GM13977 (cell line): ENCODE measurements at regions of chr11 and their contacts with region 1.

Region 1: GRCh38 chr11:60634126-60634525 is 65.3 kb upstream of the MS4A8 start:
- DNase-seq: peak; percentile 42
- CTCF ChIP-seq: peak; percentile 60

Region 2: GRCh38 chr11:60193687-60194433 is 440.3 kb before region 1 on chr11:
- in situ Hi-C with region 1: no loop called
- DNase-seq: peak; percentile 54
- CTCF ChIP-seq: peak; percentile 74

Region 3: DNA sequence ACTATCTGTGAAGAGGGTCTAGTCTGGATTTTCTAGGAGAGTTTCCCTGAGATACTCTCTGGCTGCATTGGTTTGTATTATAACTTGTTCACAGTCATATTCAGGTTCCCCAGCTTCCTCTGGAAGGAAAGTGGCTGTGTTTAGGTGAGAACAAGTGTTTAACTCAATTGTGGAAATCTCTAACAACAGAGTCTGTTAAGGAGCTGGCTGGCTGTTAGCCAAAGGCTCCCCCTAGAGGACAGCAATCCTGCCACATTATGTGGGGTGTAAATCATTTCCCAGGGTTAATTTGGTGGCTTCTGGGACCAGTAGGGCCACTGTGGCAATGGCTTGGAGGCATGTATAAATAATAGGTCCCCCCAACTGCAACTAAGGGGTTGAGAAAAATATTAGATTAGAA is 288.6 kb before region 1 on chr11:
- in situ Hi-C with region 1: loop called (anchors 10 kb)
- DNase-seq: no peak
- CTCF ChIP-seq: peak; percentile 75